ENCODE measurements at regions of chr11 and their contacts with region 1.

Region 1: DNA sequence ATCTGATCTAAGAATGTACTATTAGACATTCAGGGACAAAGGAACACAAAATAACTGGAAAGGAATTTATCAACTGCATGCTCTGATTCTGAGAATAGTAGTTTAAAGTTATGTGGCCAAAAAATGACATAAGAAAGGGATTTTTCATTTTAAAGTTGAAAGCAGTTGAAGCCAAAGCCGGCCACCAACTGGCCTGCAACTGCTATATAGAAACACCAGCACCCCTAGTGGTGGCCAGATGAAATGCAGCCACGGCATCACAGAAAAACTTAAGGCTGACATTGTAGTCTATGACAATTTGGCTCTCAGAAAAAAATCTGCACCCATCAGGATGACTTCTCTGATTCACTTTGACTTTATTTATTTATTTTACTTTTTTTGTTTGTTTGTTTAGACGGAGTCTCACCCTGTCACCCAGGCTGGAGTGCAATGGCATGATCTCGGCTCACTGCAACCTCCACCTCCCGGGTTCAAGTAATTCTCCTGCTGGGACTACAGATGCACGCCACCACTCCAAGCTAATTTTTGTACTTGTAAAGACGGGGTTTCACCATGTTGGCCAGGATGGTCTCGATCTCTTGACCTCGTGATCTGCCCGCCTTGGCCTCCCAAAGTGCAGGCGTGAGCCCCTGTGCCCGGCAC is 59.2 kb downstream of the SLC35F2 start:
- DNase-seq: peak; percentile 77
- H3K4me3 Mint-ChIP-seq: no peak overlapping the region
- H3K27ac Mint-ChIP-seq: no peak overlapping the region
- H3K4me1 Mint-ChIP-seq: no peaks in the 10 kb centered on the region
- H3K27me3 Mint-ChIP-seq: no peaks in the 10 kb centered on the region

Region 2: DNA sequence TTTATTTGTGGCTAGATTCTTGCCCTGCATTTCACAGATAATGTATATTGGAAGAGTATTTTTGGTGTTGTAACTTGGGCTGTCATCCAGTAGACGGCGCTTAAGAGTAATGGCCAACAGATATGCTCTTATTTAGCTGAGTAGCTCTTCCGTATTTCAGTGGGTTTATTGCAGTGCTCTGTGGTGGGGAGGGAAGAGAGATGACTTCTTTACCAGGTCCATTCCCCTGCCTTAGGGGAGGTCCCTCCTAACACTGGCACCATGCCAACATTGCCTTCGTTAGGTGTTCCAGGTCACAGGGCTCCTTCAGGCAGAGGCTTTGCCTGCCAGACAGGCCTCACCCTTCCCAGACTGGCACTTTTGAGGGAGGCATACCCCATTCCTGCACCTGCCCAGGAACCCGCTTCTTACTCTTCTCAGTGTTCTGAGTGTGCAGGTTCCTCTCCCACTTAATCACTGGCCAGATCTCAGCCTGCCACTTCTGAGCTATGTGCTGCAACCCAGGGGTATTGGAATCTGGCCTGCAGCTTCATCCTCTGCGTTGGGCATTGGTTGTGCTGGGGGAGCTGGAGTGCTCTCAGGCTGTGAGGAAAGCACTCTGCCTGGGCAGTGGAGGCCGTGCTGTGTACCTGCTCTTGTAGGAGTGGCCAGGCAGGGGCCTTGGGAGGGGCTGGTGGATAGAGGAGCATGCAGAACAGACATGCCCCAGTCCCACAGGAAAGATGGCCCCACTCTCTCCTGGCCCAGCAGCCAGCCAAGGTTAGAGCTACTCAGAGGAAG is 58.1 kb before region 1 on chr11:
- CTCF ChIA-PET with region 1: interaction called, 16 read pairs
- POLR2A ChIA-PET with region 1: no interaction called
- intact Hi-C with region 1: loop called (anchors 1 kb)
- DNase-seq: peak; percentile 26
- H3K4me3 Mint-ChIP-seq: no peak overlapping the region
- H3K27ac Mint-ChIP-seq: no peak overlapping the region
- H3K4me1 Mint-ChIP-seq: no peaks in the 10 kb centered on the region
- H3K27me3 Mint-ChIP-seq: peaks cover 18% of the 10 kb centered on the region

Region 3: DNA sequence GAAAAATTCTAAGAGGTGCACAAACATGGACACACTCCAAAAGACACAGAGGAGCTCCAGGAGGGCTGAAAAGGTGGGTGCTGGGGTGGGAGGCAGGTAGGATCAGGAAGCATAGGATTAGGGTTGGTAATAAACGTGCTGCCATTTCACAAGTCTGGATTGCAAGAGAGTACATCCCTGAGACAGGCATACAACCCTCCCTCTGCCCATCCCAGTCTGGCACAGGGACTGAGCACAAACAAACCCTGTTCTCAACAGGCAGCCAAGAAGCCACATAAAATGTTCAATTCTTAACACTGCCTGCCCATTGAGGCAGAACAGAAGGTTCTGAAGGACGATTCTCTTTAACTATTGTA is 40.8 kb after region 1 on chr11:
- CTCF ChIA-PET with region 1: no interaction called
- POLR2A ChIA-PET with region 1: no interaction called
- intact Hi-C with region 1: loop called (anchors 1 kb)
- DNase-seq: no peak
- H3K4me3 Mint-ChIP-seq: peak overlapping the region; percentile 53
- H3K27ac Mint-ChIP-seq: peak overlapping the region; percentile 98
- H3K4me1 Mint-ChIP-seq: peaks cover 71% of the 10 kb centered on the region
- H3K27me3 Mint-ChIP-seq: no peaks in the 10 kb centered on the region

Region 4: GRCh38 chr11:107898270-107898669 is 98.9 kb after region 1 on chr11:
- CTCF ChIA-PET with region 1: no interaction called
- POLR2A ChIA-PET with region 1: no interaction called
- intact Hi-C with region 1: loop called (anchors 1 kb)
- DNase-seq: no peak
- H3K4me3 Mint-ChIP-seq: no peak overlapping the region
- H3K27ac Mint-ChIP-seq: no peak overlapping the region
- H3K4me1 Mint-ChIP-seq: no peaks in the 10 kb centered on the region
- H3K27me3 Mint-ChIP-seq: peaks cover 3% of the 10 kb centered on the region

Measured in activated CD4-positive, alpha-beta memory T cell treated with anti-CD3 and anti-CD28 coated beads for 36 hours (primary cell).